ENCODE measurements at regions of chr17 and their contacts with region 1.

Region 1: DNA sequence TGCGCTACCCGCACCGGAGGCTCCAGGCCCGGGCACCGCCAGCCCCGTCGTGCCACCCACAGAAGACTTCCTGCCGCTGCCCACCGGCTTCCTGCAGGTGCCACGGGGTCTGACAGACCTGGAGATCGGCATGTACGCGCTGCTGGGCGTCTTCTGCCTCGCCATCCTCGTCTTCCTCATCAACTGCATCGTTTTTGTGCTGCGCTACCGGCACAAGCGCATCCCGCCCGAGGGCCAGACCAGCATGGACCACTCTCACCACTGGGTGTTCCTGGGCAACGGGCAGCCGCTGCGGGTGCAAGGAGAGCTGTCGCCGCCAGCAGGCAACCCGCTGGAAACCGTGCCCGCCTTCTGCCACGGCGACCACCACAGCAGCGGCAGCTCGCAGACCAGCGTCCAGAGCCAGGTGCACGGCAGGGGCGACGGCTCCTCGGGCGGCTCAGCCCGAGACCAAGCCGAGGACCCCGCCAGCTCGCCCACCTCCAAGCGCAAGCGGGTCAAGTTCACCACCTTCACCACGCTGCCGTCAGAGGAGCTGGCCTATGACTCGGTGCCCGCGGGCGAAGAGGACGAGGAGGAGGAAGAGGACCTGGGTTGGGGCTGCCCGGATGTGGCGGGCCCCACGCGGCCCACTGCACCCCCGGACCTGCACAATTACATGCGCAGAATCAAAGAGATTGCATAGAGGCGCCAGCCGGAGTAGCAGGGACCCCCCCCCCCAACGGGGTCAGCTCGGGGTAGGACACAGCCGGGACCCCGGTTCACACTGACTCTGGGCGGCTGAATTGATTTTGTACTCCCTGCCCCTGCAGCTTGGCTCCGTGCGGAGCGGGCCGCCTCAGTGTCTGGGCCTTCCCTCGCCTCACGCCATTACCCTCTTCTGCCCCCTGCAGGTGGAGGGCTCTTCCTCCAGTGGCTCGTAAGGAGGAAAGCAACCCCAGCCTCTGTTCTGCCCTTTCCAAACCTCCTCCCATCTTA is 58.5 kb downstream of the TMEM132E start:
- DNase-seq: peak; percentile 40
- ATAC-seq: peak; percentile 97
- H3K4me3 ChIP-seq: no peak overlapping the region
- H3K27ac ChIP-seq: no peak overlapping the region
- H3K4me1 ChIP-seq: peaks cover 0 to 6% of the 10 kb centered on the region in 2 experiments; a peak in 1 of 4 replicates
- H3K27me3 ChIP-seq: peaks cover 29% of the 10 kb centered on the region
- CTCF ChIP-seq: peak; percentile 49 to 87 (median 75)
- POLR2A ChIP-seq: no peak
- RAD21 ChIP-seq: peak; percentile 60; the same call in 1 of the 2 replicates

Region 2: GRCh38 chr17:34420254-34420766 is 217.5 kb before region 1 on chr17:
- CTCF ChIA-PET with region 1: no interaction called
- POLR2A ChIA-PET with region 1: no interaction called
- RAD21 ChIA-PET with region 1: no interaction called
- intact Hi-C with region 1: loop called (anchors 2 kb)
- DNase-seq: peak; percentile 40
- ATAC-seq: peak; percentile 84
- H3K4me3 ChIP-seq: no peak overlapping the region
- H3K27ac ChIP-seq: no peak overlapping the region
- H3K4me1 ChIP-seq: no peaks in the 10 kb centered on the region
- H3K27me3 ChIP-seq: peaks cover 42% of the 10 kb centered on the region
- CTCF ChIP-seq: peak; percentile 55 to 94 (median 84); a peak in 5 of 6 replicates
- POLR2A ChIP-seq: no peak
- RAD21 ChIP-seq: peak; percentile 80

Region 3: GRCh38 chr17:34443619-34444469 is 194.0 kb before region 1 on chr17:
- CTCF ChIA-PET with region 1: no interaction called
- POLR2A ChIA-PET with region 1: no interaction called
- RAD21 ChIA-PET with region 1: no interaction called
- intact Hi-C with region 1: loop called (anchors 1 kb)
- DNase-seq: no peak
- ATAC-seq: peak; percentile 67; the same call in 1 of the 2 replicates
- H3K4me3 ChIP-seq: no peak overlapping the region
- H3K27ac ChIP-seq: no peak overlapping the region
- H3K4me1 ChIP-seq: no peaks in the 10 kb centered on the region
- H3K27me3 ChIP-seq: peaks cover 54% of the 10 kb centered on the region
- CTCF ChIP-seq: peak; percentile 31 to 34 (median 32); a peak in 4 of 6 replicates
- POLR2A ChIP-seq: no peak
- RAD21 ChIP-seq: peak; percentile 60

Region 4: DNA sequence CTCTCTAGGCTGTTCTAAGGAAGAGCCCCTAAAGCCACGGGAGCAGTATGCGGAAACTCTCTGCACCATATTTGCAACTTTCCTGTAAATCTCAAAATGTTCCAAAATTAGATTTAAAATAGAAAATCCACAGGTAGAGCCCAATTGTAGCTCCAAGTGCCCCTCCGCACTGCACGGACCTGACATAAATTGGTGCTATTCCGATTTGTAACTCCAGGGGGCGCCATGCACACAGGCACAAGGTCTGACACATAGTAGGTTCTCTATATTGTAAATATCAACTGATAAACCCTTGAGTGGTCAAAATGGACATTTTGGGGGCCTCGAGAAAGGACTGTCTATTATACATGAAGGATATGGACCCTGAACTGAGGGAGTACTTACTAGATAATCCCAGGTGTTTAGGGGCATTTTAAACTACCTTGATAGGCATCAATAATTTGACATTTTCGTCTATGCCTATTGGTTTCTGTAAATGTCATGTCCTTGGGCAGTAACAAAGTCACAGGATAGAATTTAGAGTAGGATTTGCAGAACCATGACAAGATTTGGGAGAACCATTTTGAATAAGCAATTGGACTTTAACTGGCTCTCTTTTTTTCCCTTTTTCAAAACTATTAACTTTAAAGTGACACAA is 95.0 kb before region 1 on chr17:
- CTCF ChIA-PET with region 1: interaction called, 6 read pairs
- POLR2A ChIA-PET with region 1: no interaction called
- RAD21 ChIA-PET with region 1: interaction called in 1 of 2 experiments, 3 read pairs
- intact Hi-C with region 1: loop called (anchors 2 kb)
- DNase-seq: no peak
- ATAC-seq: peak; percentile 73
- H3K4me3 ChIP-seq: no peak overlapping the region
- H3K27ac ChIP-seq: no peak overlapping the region
- H3K4me1 ChIP-seq: no peaks in the 10 kb centered on the region
- H3K27me3 ChIP-seq: peaks cover 35% of the 10 kb centered on the region
- CTCF ChIP-seq: peak; percentile 70 to 99 (median 90)
- POLR2A ChIP-seq: no peak
- RAD21 ChIP-seq: peak; percentile 74

Region 5: DNA sequence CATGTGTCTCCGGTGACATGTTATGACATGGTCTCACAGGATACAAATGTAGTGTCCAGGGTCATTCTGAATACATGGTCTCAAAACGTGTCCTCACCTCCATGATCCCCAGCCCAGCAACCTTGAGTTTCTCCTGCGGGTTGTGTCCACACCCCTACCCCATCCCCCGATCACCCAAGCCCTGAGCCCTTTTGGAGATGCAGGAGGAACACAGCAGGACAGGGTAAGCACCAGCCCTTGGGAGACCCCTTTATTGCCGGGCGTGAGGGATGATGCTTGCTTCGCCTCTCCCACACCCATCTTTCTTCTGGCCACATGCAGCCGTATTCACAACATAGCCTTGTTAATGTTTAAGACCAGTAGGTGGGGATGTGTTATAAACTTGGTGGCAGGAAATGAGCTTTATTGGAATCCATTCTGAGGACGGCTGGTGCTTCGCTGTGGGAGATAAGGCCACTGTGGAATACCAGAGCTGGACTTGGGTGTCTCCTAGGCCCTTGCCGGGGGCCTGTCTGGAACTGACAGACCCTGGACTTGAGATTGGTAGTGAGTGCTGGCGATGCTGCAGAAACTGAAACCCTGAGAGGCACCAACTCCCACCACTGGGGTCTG is 52.9 kb before region 1 on chr17:
- CTCF ChIA-PET with region 1: interaction called, 9 read pairs
- POLR2A ChIA-PET with region 1: no interaction called
- RAD21 ChIA-PET with region 1: no interaction called
- intact Hi-C with region 1: loop called (anchors 1 kb)
- DNase-seq: no peak
- ATAC-seq: peak; percentile 63
- H3K4me3 ChIP-seq: no peak overlapping the region
- H3K27ac ChIP-seq: no peak overlapping the region
- H3K4me1 ChIP-seq: no peaks in the 10 kb centered on the region
- H3K27me3 ChIP-seq: peaks cover 64% of the 10 kb centered on the region
- CTCF ChIP-seq: peak in 1 of 3 experiments; percentile 17; a peak in 1 of 6 replicates
- POLR2A ChIP-seq: no peak
- RAD21 ChIP-seq: peak; percentile 52